ENCODE measurements at regions of chr1 and their contacts with region 1.

Region 1: GRCh38 chr1:52296345-52296744 is 69.7 kb downstream of the CC2D1B start:
- DNase-seq: no peak
- ATAC-seq: peak; percentile 48 to 57
- H3K4me3 ChIP-seq: no peak overlapping the region
- H3K27ac ChIP-seq: no peak overlapping the region
- H3K4me1 ChIP-seq: no peaks in the 10 kb centered on the region
- H3K27me3 ChIP-seq: no peaks in the 10 kb centered on the region

Region 2: DNA sequence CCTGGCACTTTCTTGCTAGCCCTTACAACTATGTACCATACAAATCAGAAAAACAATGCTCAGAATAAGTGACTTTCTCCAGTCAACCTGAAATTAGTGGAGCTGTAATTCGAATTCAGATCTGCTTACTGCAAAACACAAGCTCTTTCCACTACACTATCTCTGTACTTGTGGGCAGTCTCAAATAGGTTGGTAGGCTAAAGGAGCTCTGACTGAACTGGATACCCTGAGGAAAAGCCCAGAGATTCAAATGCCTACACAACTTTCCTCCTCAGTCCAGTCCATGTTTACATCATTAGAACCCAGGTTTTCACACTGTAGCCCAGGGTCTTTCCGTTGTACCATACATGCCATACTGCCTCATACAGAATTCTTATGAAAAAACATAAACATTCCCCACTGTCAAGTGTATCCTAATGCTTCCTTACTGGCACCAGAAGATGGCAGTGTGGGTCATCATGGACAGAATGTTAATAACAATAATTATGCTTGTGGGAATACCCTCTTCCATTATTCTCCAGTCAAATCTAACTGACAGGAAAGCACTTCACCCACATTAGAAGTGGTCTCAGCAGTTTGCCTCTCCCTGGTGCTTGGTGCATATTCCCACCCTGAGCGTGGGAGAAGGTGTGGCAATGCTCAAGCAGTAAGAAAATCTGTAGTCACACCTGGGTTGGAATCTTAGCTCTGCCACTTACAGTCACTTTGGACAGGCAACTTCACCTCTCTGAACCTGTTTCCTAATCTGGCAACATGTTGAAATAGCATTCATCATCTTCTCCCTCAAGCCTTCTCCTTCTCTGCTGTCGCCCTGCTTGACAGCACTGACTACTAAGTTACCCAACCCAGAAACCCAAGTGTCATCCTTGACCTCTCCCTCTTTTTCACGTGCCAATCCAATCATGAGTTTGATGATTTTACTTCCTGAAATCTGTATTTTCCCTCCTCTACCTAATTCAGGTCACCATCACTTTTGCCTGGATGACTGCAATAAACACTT is 168.9 kb before region 1 on chr1:
- intact Hi-C with region 1: loop called in 3 of 4 experiments (anchors 5 to 10 kb)
- DNase-seq: no peak
- ATAC-seq: peak; percentile 48 to 67
- H3K4me3 ChIP-seq: no peak overlapping the region
- H3K27ac ChIP-seq: no peak overlapping the region
- H3K4me1 ChIP-seq: no peaks in the 10 kb centered on the region
- H3K27me3 ChIP-seq: no peaks in the 10 kb centered on the region

Region 3: GRCh38 chr1:52141513-52142219 is 154.7 kb before region 1 on chr1 and contains the start of gene ZFYVE9:
- intact Hi-C with region 1: loop called in 1 of 4 experiments (anchors 5 kb)
- DNase-seq: peak; percentile 82 to 92 (median 91)
- ATAC-seq: peak; percentile 97
- H3K4me3 ChIP-seq: peak within 1 kb of the TSS; percentile 78
- H3K27ac ChIP-seq: peak within 1 kb of the TSS; percentile 92
- H3K4me1 ChIP-seq: peaks cover 2% of the 10 kb centered on the region
- H3K27me3 ChIP-seq: no peaks in the 10 kb centered on the region
- total RNA-seq, gene ZFYVE9: 18.8 to 21.3 (median 20.1) TPM